ENCODE measurements at regions of chr17 and their contacts with region 1.

Region 1: DNA sequence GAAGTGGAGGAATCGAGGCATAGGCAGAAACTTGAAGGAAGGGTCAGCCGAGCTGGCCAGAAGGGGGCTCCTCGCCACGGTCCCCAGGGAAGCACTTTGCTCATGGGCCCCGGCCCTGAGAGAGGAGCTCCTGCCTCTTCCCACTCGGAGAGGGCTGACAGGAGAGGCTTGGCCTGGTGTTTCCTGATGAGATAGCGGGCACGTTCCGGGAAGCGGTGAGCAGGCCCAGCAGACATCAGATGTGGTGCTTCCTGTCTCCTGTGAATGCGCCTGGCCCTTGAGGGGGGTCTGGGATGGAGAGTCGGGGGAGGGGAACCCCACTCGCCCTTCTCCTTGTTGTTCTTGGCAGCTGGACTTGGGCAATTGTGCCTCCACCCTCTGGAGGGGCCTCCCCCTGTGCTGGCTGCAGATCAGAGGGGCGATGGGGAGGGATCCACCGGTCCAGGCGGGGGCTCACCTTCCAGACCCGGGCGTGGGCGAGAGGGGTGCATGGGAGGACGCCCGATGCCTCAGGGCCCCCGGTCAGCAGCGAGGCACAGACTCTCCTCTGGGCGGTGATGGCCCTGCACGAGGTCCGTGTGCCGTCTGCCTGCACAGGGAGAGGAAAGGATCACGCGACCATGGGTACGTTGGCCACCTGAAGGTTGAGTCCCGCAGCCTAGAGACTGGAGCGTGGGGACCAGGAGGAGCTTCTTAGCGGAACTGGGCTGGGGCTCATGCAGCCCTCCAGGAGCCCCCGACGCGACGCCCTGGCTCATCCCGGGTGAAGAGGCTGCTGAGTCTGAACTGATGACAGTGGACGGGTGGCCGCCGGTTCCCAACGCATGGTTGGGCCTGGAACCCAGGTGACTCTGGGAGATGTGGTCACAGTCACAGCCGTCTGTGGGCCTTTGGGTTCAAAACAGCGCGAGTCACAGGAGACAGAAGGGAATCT is 25.4 kb downstream of the METRNL start:
- DNase-seq: no peak
- H3K4me3 ChIP-seq: no peak overlapping the region
- H3K27ac ChIP-seq: no peak overlapping the region
- H3K4me1 ChIP-seq: peaks cover 0 to 8% (median 0%) of the 10 kb centered on the region in 4 experiments; a peak in 3 of 7 replicates
- H3K27me3 ChIP-seq: no peaks in the 10 kb centered on the region
- CTCF ChIP-seq: peak in 2 of 3 experiments; percentile 11 to 15; a peak in 3 of 4 replicates
- EP300 ChIP-seq: no peak
- POLR2A ChIP-seq: no peak
- RAD21 ChIP-seq: no peak

Region 2: DNA sequence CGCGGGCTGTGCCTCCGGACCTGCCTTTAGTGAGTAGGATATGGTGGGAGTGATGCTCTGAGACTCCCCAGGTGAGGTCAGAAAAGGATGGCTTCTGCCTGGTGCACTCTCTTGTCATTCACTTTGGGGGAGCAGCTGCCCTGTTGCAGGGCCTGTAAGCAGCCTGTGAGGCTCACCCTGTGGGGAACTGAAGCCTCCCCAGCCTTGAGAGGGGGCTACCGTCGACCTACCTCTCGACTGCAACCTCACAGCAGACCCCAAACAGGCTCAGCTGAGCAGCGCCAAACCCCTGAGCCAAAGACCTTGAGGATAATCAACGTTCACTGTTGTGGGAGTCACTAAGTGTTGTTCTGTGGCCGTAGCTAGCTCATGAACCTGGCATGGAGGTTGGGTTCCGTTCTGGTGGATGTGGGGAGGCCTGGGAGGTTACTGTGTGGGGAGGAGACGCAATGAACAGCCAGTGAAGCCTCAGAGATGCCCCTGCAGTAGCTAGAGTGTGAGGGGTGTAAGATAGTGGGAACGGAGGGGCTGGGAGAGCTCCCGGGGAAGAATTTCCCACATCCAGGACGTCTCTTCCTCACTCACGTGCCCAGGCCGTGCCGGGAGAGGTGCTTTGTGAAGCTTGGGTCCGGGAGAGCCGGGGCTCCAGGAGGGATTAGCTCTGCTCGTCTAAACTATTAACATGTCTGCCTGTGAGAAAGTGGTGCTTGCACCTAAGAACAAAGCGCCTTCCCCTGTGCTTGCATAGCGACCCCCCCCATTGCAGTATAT is 13.4 kb after region 1 on chr17:
- CTCF ChIA-PET with region 1: interaction called, 18 read pairs
- POLR2A ChIA-PET with region 1: interaction called, 7 read pairs
- DNase-seq: no peak
- H3K4me3 ChIP-seq: no peak overlapping the region
- H3K27ac ChIP-seq: no peak overlapping the region
- H3K4me1 ChIP-seq: peaks cover 0 to 2% (median 0%) of the 10 kb centered on the region in 4 experiments; a peak in 1 of 7 replicates
- H3K27me3 ChIP-seq: peaks cover 0 to 21% (median 10%) of the 10 kb centered on the region in 4 experiments; a peak in 5 of 7 replicates
- CTCF ChIP-seq: no peak
- EP300 ChIP-seq: no peak
- POLR2A ChIP-seq: no peak
- RAD21 ChIP-seq: no peak

Region 3: DNA sequence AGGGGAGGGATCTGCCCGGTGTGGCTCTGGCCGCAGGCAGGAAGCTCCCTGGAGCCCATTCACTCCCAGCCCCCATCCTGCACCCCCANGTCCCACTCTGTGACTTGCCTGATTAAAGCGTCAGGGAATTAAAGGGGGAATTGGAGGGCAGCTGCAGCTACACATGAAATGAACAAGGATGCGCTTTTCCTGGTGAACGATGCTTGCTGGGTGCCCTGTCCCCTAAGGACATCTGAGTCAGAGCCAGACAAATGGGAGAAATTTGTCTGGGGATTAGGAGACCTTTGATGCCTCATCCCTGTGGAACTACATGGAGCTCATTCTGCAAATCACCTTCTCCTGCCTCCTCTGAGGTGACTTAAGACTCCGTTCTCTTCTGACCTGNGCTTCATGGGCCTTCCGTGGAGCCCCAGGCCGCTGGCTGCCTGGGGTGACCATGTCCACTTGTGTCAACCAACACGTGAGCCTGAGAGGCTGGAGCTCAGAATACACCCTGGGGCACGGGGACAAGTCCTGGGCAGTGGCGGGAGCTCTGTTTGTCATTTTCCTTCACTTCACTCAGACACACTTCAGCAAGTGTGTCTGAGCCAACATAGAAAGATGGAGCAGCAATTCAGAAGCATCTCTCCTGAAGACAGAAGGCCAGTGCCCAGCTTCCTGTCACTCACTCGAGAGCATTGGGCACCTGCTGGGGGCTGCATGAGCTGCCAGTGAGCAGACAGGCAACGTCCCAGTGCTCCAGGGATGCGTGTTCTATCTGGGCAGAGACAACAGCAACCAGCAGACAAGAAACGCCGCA is 28.7 kb after region 1 on chr17:
- CTCF ChIA-PET with region 1: no interaction called
- POLR2A ChIA-PET with region 1: no interaction called
- DNase-seq: no peak
- H3K4me3 ChIP-seq: no peak overlapping the region
- H3K27ac ChIP-seq: no peak overlapping the region
- H3K4me1 ChIP-seq: no peaks in the 10 kb centered on the region
- H3K27me3 ChIP-seq: no peaks in the 10 kb centered on the region
- CTCF ChIP-seq: no peak
- EP300 ChIP-seq: no peak
- POLR2A ChIP-seq: no peak
- RAD21 ChIP-seq: no peak

Region 4: GRCh38 chr17:83155138-83156121 is 50.6 kb after region 1 on chr17:
- CTCF ChIA-PET with region 1: no interaction called
- POLR2A ChIA-PET with region 1: no interaction called
- DNase-seq: no peak
- H3K4me3 ChIP-seq: no peak overlapping the region
- H3K27ac ChIP-seq: no peak overlapping the region
- H3K4me1 ChIP-seq: peaks cover 0 to 4% (median 0%) of the 10 kb centered on the region in 4 experiments; a peak in 2 of 7 replicates
- H3K27me3 ChIP-seq: no peaks in the 10 kb centered on the region
- CTCF ChIP-seq: no peak
- EP300 ChIP-seq: no peak
- POLR2A ChIP-seq: no peak
- RAD21 ChIP-seq: no peak